GM10248 (cell line): ENCODE measurements at regions of chr10 and their contacts with region 1.

Region 1: DNA sequence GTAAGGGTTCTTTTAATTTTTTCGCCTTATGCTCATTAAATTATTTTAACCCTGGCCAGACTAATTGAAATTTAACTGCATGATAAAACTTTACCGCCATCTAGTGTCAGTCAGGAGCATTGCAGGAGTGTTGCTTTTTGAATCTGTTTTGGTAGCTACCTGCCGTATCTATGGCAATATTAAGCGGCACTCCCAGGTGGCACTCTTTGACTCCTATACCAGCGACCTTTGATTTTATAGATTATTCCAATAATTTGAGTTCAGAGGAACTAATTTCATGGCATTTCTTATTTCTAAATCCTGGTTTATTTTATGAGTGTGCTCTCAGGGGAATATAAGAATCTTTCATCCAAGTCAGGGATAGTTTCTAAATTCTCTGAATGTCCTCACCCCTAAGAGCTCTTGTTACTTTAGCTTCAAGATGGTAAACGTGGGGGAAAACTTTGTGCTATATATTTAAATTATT is 198.9 kb downstream of the REEP3 start:
- DNase-seq: peak; percentile 41
- CTCF ChIP-seq: peak; percentile 85

Region 2: DNA sequence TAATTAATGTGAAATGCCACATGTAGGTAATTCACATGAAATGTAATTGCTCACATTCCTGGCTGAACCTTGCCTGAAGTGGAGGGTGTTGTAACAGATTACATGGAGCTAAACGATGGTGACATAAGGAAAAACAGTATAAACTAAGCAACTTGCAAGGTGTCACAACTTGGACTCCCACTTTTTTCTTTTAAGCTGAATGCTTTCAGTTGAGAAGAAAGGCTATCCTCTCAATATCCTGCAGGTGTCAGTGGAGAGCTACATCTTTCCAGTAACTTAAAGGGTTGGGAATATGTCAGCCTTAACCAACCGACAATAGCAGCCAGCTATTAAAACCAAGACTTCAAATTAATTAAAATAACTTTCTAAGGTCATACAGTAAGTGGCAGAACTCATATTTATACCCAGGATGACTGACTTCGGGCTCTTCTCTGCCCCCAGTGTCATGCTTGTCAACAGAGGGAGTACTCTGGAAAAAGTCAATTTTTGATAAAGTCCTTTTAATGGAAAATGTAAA is 553.3 kb before region 1 on chr10:
- CTCF ChIA-PET with region 1: interaction called, 255 read pairs
- POLR2A ChIA-PET with region 1: no interaction called
- DNase-seq: peak; percentile 31
- CTCF ChIP-seq: peak; percentile 60

Region 3: GRCh38 chr10:63286754-63287264 is 433.3 kb before region 1 on chr10:
- CTCF ChIA-PET with region 1: interaction called, 15 read pairs
- POLR2A ChIA-PET with region 1: no interaction called
- DNase-seq: peak; percentile 52
- CTCF ChIP-seq: no peak

Region 4: GRCh38 chr10:63629363-63630084 is 90.6 kb before region 1 on chr10:
- CTCF ChIA-PET with region 1: interaction called, 115 read pairs
- POLR2A ChIA-PET with region 1: interaction called, 5 read pairs
- DNase-seq: peak; percentile 73
- CTCF ChIP-seq: peak; percentile 87

Region 5: GRCh38 chr10:63700209-63700613 is 19.9 kb before region 1 on chr10:
- CTCF ChIA-PET with region 1: interaction called, 26 read pairs
- POLR2A ChIA-PET with region 1: no interaction called
- DNase-seq: no peak
- CTCF ChIP-seq: no peak

Region 6: GRCh38 chr10:63767138-63767801 is 47.2 kb after region 1 on chr10:
- CTCF ChIA-PET with region 1: interaction called, 14 read pairs
- POLR2A ChIA-PET with region 1: no interaction called
- DNase-seq: no peak
- CTCF ChIP-seq: peak; percentile 35